ENCODE measurements at regions of chr10 and their contacts with region 1.

Region 1: GRCh38 chr10:15859906-15860691 is at the start of gene MINDY3:
- DNase-seq: peak; percentile 69
- H3K4me3 Mint-ChIP-seq: peak within 1 kb of the TSS; percentile 92
- H3K27ac Mint-ChIP-seq: peak within 1 kb of the TSS; percentile 81
- H3K4me1 Mint-ChIP-seq: peaks cover 24% of the 10 kb centered on the region
- H3K27me3 Mint-ChIP-seq: peaks cover 17% of the 10 kb centered on the region
- total RNA-seq, gene MINDY3: 19.2 and 20.9 TPM in 2 replicates

Region 2: DNA sequence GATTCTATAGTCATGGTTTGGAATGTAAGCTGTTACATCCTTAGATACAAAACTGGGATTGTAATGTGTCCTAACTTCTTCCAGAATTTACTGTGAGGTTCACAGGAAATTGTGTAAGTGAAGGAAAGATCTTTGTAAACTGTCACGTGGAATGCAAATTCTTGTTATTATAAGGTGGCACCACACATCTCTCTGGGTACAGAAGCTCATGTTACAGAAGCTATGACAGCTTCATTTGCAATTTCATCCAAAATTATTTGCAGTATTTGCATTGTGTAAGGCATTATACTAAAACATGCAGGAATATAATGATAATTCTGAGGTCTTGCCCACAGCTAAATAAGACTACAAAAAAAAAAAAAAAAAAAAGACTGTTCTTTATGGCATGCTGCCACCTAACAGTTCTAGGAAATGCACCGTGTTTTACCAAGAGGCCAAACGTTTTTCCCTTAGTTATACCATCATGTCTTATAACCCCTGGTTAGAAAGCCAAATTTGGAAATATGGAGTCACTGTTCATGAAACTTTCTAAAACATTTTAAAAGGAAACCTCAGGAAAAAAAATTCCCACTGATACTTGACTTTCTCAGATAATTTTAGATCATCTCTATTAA is 17.4 kb before region 1 on chr10:
- intact Hi-C with region 1: loop called (anchors 1 kb)
- DNase-seq: no peak
- H3K4me3 Mint-ChIP-seq: no peak overlapping the region
- H3K27ac Mint-ChIP-seq: no peak overlapping the region
- H3K4me1 Mint-ChIP-seq: peaks cover 24% of the 10 kb centered on the region
- H3K27me3 Mint-ChIP-seq: no peaks in the 10 kb centered on the region

Region 3: GRCh38 chr10:15898046-15898445 is 37.9 kb after region 1 on chr10:
- intact Hi-C with region 1: no loop called
- DNase-seq: no peak
- H3K4me3 Mint-ChIP-seq: no peak overlapping the region
- H3K27ac Mint-ChIP-seq: no peak overlapping the region
- H3K4me1 Mint-ChIP-seq: no peaks in the 10 kb centered on the region
- H3K27me3 Mint-ChIP-seq: peaks cover 4% of the 10 kb centered on the region

Region 4: GRCh38 chr10:16817125-16818019 is 957.3 kb after region 1 on chr10 and contains the start of gene RSU1:
- intact Hi-C with region 1: loop called (anchors 1 kb)
- DNase-seq: peak; percentile 100
- H3K4me3 Mint-ChIP-seq: peak within 1 kb of the TSS; percentile 93
- H3K27ac Mint-ChIP-seq: peak within 1 kb of the TSS; percentile 79
- H3K4me1 Mint-ChIP-seq: peaks cover 27% of the 10 kb centered on the region
- H3K27me3 Mint-ChIP-seq: peaks cover 10% of the 10 kb centered on the region
- total RNA-seq, gene RSU1: 49.1 and 54.0 TPM in 2 replicates